ENCODE measurements at regions of chr7 and their contacts with region 1.

Region 1: GRCh38 chr7:142088022-142088714 is 23.4 kb upstream of the MGAM2 start:
- DNase-seq: no peak
- ATAC-seq: no peak
- H3K4me3 ChIP-seq: no peak overlapping the region
- H3K27ac ChIP-seq: no peak overlapping the region
- H3K4me1 ChIP-seq: no peaks in the 10 kb centered on the region
- H3K27me3 ChIP-seq: no peaks in the 10 kb centered on the region
- CTCF ChIP-seq: no peak
- POLR2A ChIP-seq: no peak
- RAD21 ChIP-seq: no peak

Region 2: GRCh38 chr7:142060936-142061335 is 27.2 kb before region 1 on chr7:
- CTCF ChIA-PET with region 1: no interaction called
- POLR2A ChIA-PET with region 1: no interaction called
- RAD21 ChIA-PET with region 1: no interaction called
- intact Hi-C with region 1: loop called (anchors 1 kb)
- DNase-seq: no peak
- ATAC-seq: no peak
- H3K4me3 ChIP-seq: no peak overlapping the region
- H3K27ac ChIP-seq: no peak overlapping the region
- H3K4me1 ChIP-seq: no peaks in the 10 kb centered on the region
- H3K27me3 ChIP-seq: peaks cover 9% of the 10 kb centered on the region; the same call in 1 of the 2 replicates
- CTCF ChIP-seq: no peak
- POLR2A ChIP-seq: no peak
- RAD21 ChIP-seq: no peak